SK-N-SH (cell line): ENCODE measurements at regions of chr7 and their contacts with region 1.

Region 1: GRCh38 chr7:86814661-86815379 is 171.1 kb downstream of the GRM3 start:
- DNase-seq: peak; percentile 50
- H3K4me3 ChIP-seq: no peak overlapping the region
- H3K27ac ChIP-seq: no peak overlapping the region
- H3K4me1 ChIP-seq: no peaks in the 10 kb centered on the region; a peak in 1 of 4 replicates
- H3K27me3 ChIP-seq: no peaks in the 10 kb centered on the region
- CTCF ChIP-seq: peak; percentile 70
- EP300 ChIP-seq: no peak
- RAD21 ChIP-seq: peak; percentile 87

Region 2: DNA sequence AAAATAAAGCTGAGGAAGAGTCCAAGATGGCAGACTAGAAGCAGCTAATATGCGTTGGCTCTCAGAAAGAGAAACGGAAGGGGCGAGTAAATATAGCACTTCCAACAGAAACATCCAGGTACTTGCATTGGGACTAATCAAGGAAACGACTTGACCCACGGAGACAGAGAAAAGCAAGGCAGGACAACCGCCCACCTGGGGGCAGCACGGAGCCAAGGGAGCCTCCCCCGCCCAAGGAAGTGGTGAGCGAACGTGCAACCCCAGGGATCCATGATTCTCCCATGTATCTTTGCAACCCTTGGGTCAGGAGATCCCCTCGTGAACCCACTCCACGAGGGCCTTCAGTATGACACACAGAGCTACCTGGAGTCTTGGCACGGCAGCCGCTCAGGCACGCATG is 216.5 kb before region 1 on chr7:
- CTCF ChIA-PET with region 1: interaction called, 64 read pairs
- POLR2A ChIA-PET with region 1: no interaction called
- DNase-seq: peak; percentile 53
- H3K4me3 ChIP-seq: no peak overlapping the region
- H3K27ac ChIP-seq: no peak overlapping the region
- H3K4me1 ChIP-seq: peaks cover 0 to 2% of the 10 kb centered on the region in 2 experiments; a peak in 1 of 4 replicates
- H3K27me3 ChIP-seq: no peaks in the 10 kb centered on the region
- CTCF ChIP-seq: peak; percentile 62
- EP300 ChIP-seq: no peak
- RAD21 ChIP-seq: peak; percentile 63

Region 3: DNA sequence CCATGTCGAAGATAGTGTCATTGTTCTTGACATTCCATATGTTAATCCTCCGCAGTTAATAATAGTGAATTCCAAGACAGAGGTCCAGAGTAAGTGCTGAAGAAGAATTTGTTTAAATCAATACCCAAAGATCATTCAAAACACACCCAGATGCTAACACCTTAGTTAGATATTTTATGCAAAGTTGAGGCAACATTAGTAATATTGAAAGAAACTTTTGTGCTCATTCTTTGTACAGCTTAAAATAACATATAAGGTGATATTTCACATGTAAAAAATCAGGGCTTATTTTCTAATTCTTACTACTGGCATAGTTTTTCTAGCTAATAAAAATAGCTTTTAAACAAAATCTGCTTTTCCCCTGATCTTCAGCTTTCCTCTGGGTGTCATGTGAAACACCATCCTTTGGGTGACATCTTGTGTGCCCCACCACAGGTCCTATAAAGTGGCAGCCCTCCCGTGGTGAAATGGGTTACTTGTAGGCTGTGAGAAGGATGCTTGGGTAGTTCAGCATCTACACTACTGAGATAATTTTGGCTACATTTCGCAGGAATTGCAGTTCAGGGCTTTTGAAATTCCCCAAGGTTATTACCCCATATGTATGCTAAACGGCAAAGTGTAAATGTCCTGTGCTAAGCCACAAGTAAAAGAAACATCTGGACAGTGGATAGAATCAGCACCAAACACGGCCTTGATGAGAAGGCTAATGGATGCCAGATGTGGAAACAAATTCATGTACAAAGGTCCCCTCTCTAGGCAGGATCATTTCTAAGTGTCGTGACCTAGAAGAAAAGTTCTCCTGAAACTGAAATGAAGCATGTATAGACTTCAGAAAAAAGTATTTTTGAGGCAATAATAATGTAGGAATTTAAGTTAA is 65.7 kb before region 1 on chr7:
- CTCF ChIA-PET with region 1: interaction called, 23 read pairs
- POLR2A ChIA-PET with region 1: no interaction called
- DNase-seq: peak; percentile 15
- H3K4me3 ChIP-seq: no peak overlapping the region
- H3K27ac ChIP-seq: no peak overlapping the region
- H3K4me1 ChIP-seq: peaks cover 0 to 12% of the 10 kb centered on the region in 2 experiments; a peak in 2 of 4 replicates
- H3K27me3 ChIP-seq: no peaks in the 10 kb centered on the region
- CTCF ChIP-seq: no peak
- EP300 ChIP-seq: peak in 1 of 2 experiments; percentile 26; a peak in 1 of 4 replicates
- RAD21 ChIP-seq: no peak

Region 4: DNA sequence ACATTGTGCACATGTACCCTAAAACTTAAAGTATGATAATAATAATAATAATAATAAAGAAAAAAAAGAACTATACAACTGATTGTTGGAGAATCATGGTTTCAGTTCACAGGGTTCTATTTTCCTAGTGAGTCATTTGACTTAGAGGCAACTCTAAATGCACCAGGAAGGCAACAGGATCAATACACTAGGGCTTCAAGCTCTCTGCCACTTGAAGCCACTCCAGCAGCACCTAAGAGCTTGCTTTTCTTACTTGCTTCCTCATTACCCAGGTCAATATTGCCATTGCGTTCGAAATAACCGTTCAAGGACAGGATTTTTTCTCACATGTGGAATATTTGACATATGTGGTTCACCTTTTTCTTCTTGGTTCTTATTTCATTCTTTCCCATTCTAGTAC is 18.5 kb after region 1 on chr7:
- CTCF ChIA-PET with region 1: interaction called, 14 read pairs
- POLR2A ChIA-PET with region 1: no interaction called
- DNase-seq: no peak
- H3K4me3 ChIP-seq: no peak overlapping the region
- H3K27ac ChIP-seq: no peak overlapping the region
- H3K4me1 ChIP-seq: no peaks in the 10 kb centered on the region
- H3K27me3 ChIP-seq: no peaks in the 10 kb centered on the region
- CTCF ChIP-seq: no peak
- EP300 ChIP-seq: no peak
- RAD21 ChIP-seq: no peak

Region 5: DNA sequence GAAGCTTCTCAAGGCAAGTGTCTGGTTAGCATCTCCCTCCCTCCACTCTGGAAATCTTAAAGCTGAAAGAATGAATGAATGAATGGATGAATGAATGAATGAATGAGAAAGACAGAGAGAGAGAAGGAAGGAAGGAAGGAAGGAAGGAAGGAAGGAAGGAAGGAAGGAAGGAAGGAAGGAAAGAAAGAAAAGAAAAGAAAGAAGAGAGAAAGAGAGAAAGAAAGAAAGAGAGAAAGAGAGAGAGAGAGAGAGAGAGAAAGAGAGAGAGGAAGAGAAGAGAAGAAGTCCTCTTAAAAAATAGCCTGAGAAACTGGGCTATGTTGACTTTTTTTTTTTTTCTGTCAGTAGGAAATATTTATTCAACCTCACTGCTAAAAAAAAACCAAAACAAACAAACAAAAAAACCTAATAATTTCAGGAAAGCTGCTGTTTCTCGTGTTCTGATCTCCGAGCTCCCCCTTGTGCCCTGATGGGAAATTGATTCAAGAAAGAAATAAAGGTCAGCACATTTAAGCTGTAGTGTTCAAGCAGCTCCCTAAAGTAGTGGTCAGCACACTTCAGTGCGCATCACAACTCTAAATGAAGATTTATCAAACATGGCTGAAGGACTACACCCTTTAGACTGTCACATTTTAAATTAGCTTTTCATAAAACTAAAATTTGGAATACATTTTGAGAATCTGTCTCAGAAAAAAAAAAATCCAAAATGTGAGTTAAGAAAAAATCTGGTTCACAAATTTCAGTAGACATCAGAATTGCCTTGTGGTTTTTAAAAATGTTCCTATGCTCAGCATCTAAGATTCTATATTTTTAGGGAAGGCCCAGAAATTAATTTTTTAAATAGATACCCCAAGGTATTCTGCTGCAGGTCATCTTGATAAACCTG is 90.4 kb after region 1 on chr7:
- CTCF ChIA-PET with region 1: interaction called, 11 read pairs
- POLR2A ChIA-PET with region 1: no interaction called
- DNase-seq: peak; percentile 15
- H3K4me3 ChIP-seq: no peak overlapping the region
- H3K27ac ChIP-seq: no peak overlapping the region
- H3K4me1 ChIP-seq: peaks cover 0 to 4% of the 10 kb centered on the region in 2 experiments; a peak in 2 of 4 replicates
- H3K27me3 ChIP-seq: no peaks in the 10 kb centered on the region
- CTCF ChIP-seq: peak; percentile 84
- EP300 ChIP-seq: no peak
- RAD21 ChIP-seq: peak; percentile 86